Esophagus squamous epithelium (tissue), 5 donors: ENCODE measurements at regions of chr3 and their contacts with region 1.

Region 1: DNA sequence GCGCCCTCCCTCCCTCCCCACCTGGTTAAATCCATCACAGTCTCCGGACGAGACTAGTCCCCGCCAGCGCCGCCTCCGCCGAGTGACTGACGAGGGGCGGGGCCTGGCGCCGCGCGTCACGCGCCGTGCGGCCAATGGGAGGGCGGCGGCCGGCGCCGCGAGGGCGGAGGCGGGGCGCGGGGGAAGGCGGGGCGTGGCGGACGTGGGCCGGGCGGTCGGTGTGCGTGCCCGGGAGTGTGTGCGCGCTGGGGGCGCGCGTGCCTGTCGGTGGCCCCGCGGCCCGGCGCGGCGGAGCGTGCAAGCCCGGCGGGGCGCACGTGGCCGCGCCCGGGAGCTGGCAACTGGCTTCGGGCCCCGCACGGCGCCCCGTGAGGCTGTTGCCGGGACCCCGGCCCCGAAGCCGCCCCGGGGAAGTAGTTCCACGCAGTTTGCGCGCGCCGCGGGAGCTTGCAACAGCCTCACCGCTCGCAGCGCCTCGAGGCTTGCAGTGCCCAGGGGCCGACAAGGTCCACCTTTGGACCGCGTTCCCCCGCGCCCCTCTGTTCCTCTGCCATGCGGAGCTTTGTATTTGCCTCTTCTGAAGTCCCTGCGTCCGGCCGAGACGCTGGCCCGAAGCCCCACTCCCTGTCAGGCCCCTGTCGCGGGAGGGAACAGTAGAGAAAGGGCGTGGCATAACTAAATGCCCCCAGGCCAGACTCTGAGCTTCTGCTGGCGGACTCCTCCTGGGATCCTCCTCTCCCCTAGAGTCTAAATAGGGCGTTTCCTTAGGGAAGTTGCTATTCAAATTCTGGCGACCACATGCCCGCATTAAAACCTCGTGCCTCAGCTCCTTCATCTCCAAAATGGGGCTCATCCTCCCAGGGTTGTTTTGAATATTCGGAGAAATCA is 400.9 kb downstream of the SHQ1 start:
- DNase-seq: peak; percentile 51
- H3K4me3 ChIP-seq: peak overlapping the region; percentile 82 to 94 (median 87)
- H3K27ac ChIP-seq: peak overlapping the region; percentile 90 to 95 (median 94)
- H3K4me1 ChIP-seq: peaks cover 0 to 53% (median 12%) of the 10 kb centered on the region in 3 donors
- H3K27me3 ChIP-seq: no peaks in the 10 kb centered on the region
- CTCF ChIP-seq: peak in 3 of 6 experiments; percentile 9 to 20 (median 16)
- POLR2A ChIP-seq: peak in 1 of 4 donors; percentile 46

Region 2: GRCh38 chr3:72319194-72320094 is 127.9 kb before region 1 on chr3:
- intact Hi-C with region 1: no loop called
- DNase-seq: no peak
- H3K4me3 ChIP-seq: no peak overlapping the region
- H3K27ac ChIP-seq: peak overlapping the region in 3 of 4 donors; percentile 35 to 58 (median 42)
- H3K4me1 ChIP-seq: peaks cover 0 to 31% (median 11%) of the 10 kb centered on the region in 3 donors
- H3K27me3 ChIP-seq: no peaks in the 10 kb centered on the region
- CTCF ChIP-seq: no peak
- POLR2A ChIP-seq: no peak

Region 3: DNA sequence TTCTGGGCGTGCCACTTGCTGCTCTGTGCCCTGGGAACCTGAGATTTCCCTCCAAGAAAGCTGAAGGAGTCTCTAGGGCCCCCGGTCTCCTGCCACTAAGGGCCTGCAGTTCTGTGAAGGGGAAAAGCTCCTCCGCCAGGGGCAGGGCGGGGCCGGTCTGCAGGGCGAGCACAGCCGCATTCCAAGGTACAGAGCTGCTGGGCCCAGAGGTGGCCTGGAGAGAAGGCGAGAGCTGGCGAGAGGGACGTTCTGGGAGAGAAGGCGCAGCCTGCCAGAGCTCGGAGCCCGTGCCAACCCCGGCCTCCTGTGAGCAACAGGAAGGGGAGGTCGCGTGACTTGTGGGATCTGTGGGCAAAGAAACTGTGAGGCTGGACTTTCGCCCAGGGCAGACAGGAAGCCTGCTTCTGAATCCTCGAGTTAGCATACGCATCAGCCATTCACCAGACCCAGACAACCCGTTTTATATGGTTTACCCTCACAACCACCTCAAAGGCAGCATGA is 99.4 kb before region 1 on chr3:
- intact Hi-C with region 1: loop called (anchors 5 kb)
- DNase-seq: peak; percentile 16
- H3K4me3 ChIP-seq: no peak overlapping the region
- H3K27ac ChIP-seq: peak overlapping the region in 3 of 4 donors; percentile 14 to 53 (median 47)
- H3K4me1 ChIP-seq: peaks cover 9 to 37% (median 17%) of the 10 kb centered on the region in 3 donors
- H3K27me3 ChIP-seq: no peaks in the 10 kb centered on the region
- CTCF ChIP-seq: peak in 3 of 6 experiments; percentile 11 to 36 (median 12)
- POLR2A ChIP-seq: no peak

Region 4: DNA sequence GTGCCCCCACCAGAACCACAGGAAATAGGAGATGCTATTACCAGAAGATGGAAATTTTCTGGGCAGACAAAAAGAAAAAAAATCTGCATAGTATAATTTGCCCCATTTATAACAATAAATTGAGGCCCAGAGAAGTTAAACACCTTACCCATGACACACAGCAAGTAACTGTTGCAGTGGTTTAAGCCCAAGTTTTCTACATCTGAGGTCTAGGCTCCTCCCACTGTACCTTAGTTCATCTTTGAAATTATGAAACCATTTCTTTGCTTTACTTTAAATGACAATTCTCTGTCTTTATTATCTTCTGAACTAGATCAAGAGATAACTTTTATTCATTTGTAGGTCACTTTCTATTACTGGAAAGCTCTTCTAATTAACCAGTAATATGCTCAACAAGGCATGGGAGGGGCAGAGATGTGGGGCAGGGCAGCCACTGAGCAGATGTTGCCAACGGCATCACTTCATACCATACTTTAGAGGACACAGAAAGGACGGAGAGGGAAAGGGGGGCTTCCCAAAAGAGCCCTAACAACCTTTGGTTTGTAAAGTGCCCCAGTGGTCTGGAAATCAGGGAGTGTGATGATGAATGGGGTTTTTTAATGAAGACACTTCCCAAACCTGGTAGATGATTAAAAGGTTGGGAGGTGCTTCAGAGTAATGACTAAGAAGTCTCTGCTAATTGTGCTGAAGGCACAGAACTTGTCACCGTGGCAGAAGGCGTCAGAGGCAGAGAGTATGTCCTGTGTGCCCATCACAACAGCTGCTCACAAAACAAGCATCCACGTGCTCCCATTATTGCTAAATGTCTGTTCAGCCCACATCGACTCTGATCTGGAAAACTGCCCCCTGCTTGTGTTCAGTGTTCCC is 58.5 kb after region 1 on chr3:
- intact Hi-C with region 1: no loop called
- DNase-seq: no peak
- H3K4me3 ChIP-seq: no peak overlapping the region
- H3K27ac ChIP-seq: no peak overlapping the region
- H3K4me1 ChIP-seq: no peaks in the 10 kb centered on the region
- H3K27me3 ChIP-seq: no peaks in the 10 kb centered on the region
- CTCF ChIP-seq: no peak
- POLR2A ChIP-seq: no peak

Region 5: GRCh38 chr3:72694398-72694797 is 247.1 kb after region 1 on chr3:
- intact Hi-C with region 1: no loop called
- DNase-seq: no peak
- H3K4me3 ChIP-seq: no peak overlapping the region
- H3K27ac ChIP-seq: no peak overlapping the region
- H3K4me1 ChIP-seq: no peaks in the 10 kb centered on the region
- H3K27me3 ChIP-seq: peaks cover 0 to 7% (median 0%) of the 10 kb centered on the region in 4 donors
- CTCF ChIP-seq: no peak
- POLR2A ChIP-seq: no peak